ENCODE measurements at regions of chr12 and their contacts with region 1.

Region 1: GRCh38 chr12:49264738-49265515 is at the start of gene TUBA1C:
- DNase-seq: peak; percentile 93
- H3K4me3 Mint-ChIP-seq: peak within 1 kb of the TSS; percentile 95
- H3K27ac Mint-ChIP-seq: peak within 1 kb of the TSS; percentile 95
- H3K4me1 Mint-ChIP-seq: peaks cover 56% of the 10 kb centered on the region
- H3K27me3 Mint-ChIP-seq: no peaks in the 10 kb centered on the region
- total RNA-seq, gene TUBA1C: 250 to 262 TPM

Region 2: DNA sequence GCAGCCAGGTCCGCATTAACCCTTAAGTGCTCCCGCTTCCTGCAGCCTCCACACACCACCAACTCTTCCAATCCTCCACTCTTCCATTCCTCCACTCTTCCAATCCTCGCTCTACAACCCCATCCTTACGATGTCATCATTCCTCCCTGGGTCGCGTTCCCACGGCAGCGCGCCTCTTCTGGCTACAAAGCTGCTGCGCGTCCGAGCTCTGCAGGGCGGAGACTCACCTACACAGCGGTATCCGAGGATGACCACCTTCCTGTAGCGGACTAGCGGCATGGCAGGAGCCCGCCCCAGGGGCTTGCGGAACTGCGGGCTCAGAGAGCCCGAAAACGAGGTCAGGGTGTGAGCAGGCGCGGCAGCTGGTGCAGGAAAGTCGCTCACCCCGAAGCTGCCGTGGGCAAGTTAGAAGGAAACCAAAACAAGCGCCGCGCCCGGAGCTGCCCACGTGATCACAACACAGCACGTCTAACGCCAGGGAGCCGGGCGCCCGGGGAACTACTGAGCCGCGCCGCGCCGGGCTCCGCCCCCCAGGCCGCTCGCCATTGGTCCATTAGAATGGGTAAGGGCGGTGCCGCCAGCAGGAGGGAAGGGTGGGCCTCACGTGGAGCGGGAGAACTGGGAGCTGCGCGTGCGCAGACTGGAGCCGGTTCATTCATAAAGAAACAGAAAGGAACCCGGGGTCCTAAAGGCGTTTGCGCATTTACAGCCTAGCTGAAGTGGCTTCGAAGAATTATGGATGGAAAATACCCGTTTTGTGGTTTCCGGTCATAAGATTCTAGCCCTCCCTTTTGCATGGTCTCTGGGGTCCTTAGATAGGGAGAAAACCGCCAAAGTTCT is 195.2 kb before region 1 on chr12 and contains the start of gene RHEBL1:
- CTCF ChIA-PET with region 1: no interaction called
- POLR2A ChIA-PET with region 1: interaction called, 15 read pairs
- DNase-seq: peak; percentile 100
- H3K4me3 Mint-ChIP-seq: peak within 1 kb of the TSS; percentile 97
- H3K27ac Mint-ChIP-seq: peak within 1 kb of the TSS; percentile 86
- H3K4me1 Mint-ChIP-seq: peaks cover 33% of the 10 kb centered on the region
- H3K27me3 Mint-ChIP-seq: no peaks in the 10 kb centered on the region
- total RNA-seq, gene RHEBL1: 14.8 to 15.8 TPM

Region 3: GRCh38 chr12:49232940-49233841 is 31.7 kb before region 1 on chr12:
- CTCF ChIA-PET with region 1: interaction called, 8 read pairs
- POLR2A ChIA-PET with region 1: interaction called, 10 read pairs
- DNase-seq: no peak
- H3K4me3 Mint-ChIP-seq: peak overlapping the region; percentile 16
- H3K27ac Mint-ChIP-seq: peak overlapping the region; percentile 45
- H3K4me1 Mint-ChIP-seq: peaks cover 25% of the 10 kb centered on the region
- H3K27me3 Mint-ChIP-seq: peaks cover 3% of the 10 kb centered on the region

Region 4: DNA sequence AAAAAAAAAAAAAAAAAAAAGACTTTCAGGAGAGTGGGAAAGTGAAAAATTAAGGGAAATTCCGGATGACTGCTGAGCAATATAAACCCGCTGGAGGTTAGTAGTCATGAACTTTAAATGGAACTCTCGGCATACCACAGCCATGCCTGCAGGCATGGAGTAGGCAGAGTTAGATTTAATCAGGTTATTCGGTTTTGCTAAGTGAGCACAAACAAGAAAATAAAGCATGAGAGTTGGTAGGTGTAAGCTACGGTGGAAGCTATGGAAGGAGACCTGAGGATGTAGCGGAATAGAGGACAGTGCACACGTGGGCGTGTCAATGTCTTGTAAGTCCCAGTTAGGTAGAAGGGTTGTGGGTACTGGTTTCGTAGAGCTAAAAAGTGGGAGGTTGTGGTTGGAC is 11.8 kb before region 1 on chr12:
- CTCF ChIA-PET with region 1: interaction called, 3 read pairs
- POLR2A ChIA-PET with region 1: interaction called, 34 read pairs
- DNase-seq: no peak
- H3K4me3 Mint-ChIP-seq: no peak overlapping the region
- H3K27ac Mint-ChIP-seq: no peak overlapping the region
- H3K4me1 Mint-ChIP-seq: peaks cover 6% of the 10 kb centered on the region
- H3K27me3 Mint-ChIP-seq: no peaks in the 10 kb centered on the region

Region 5: GRCh38 chr12:49296034-49296835 is 31.3 kb after region 1 on chr12:
- CTCF ChIA-PET with region 1: interaction called, 9 read pairs
- POLR2A ChIA-PET with region 1: interaction called, 13 read pairs
- DNase-seq: peak; percentile 68
- H3K4me3 Mint-ChIP-seq: peak overlapping the region; percentile 62
- H3K27ac Mint-ChIP-seq: no peak overlapping the region
- H3K4me1 Mint-ChIP-seq: peaks cover 34% of the 10 kb centered on the region
- H3K27me3 Mint-ChIP-seq: peaks cover 53% of the 10 kb centered on the region

Region 6: GRCh38 chr12:49342066-49342913 is 77.4 kb after region 1 on chr12:
- CTCF ChIA-PET with region 1: interaction called, 10 read pairs
- POLR2A ChIA-PET with region 1: interaction called, 4 read pairs
- DNase-seq: peak; percentile 80
- H3K4me3 Mint-ChIP-seq: peak overlapping the region; percentile 35
- H3K27ac Mint-ChIP-seq: no peak overlapping the region
- H3K4me1 Mint-ChIP-seq: peaks cover 40% of the 10 kb centered on the region
- H3K27me3 Mint-ChIP-seq: peaks cover 90% of the 10 kb centered on the region

Region 7: GRCh38 chr12:49428793-49429192 is 163.9 kb after region 1 on chr12:
- CTCF ChIA-PET with region 1: no interaction called
- POLR2A ChIA-PET with region 1: no interaction called
- DNase-seq: no peak
- H3K4me3 Mint-ChIP-seq: no peak overlapping the region
- H3K27ac Mint-ChIP-seq: no peak overlapping the region
- H3K4me1 Mint-ChIP-seq: no peaks in the 10 kb centered on the region
- H3K27me3 Mint-ChIP-seq: no peaks in the 10 kb centered on the region

Measured in activated CD4-positive, alpha-beta memory T cell treated with anti-CD3 and anti-CD28 coated beads, Interleukin-2, amount 10 ng/mL, durations not matched to agents 7 days and 5 days (primary cell).